Transverse colon (tissue), 4 donors: ENCODE measurements at regions of chr1 and their contacts with region 1.

Region 1: GRCh38 chr1:184075055-184076029 is 23.8 kb downstream of the TSEN15 start:
- DNase-seq: peak; percentile 15
- H3K4me3 ChIP-seq: no peak overlapping the region
- H3K27ac ChIP-seq: peak overlapping the region; percentile 7 to 54 (median 23)
- H3K4me1 ChIP-seq: peaks cover 0 to 14% (median 0%) of the 10 kb centered on the region in 4 donors
- H3K27me3 ChIP-seq: no peaks in the 10 kb centered on the region
- CTCF ChIP-seq: peak; percentile 67 to 77 (median 68)
- EP300 ChIP-seq: no peak
- POLR2A ChIP-seq: no peak

Region 2: DNA sequence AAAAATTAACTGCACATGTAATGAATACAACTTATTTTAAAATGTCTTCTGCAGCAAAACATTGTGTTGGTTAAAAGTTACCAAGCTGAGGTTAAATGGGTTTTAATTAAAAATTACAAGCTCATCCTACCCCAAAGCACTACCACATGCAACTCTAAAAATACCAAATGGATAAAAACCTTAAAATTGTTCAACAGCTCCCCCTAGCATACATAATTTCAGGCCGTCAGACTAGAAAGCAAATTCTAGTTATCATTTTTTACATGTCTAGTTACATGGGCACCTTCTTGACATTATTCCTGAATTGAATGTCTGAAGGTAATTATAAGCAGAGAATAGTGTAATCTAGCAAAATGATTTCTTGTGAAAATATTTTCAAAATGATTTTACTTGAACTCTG is 488.0 kb after region 1 on chr1:
- in situ Hi-C with region 1: loop called in 1 of 4 experiments (anchors 25 kb)
- intact Hi-C with region 1: no loop called
- DNase-seq: no peak
- H3K4me3 ChIP-seq: no peak overlapping the region
- H3K27ac ChIP-seq: peak overlapping the region in 1 of 4 donors; percentile 48
- H3K4me1 ChIP-seq: peaks cover 10 to 33% (median 22%) of the 10 kb centered on the region in 4 donors
- H3K27me3 ChIP-seq: no peaks in the 10 kb centered on the region
- CTCF ChIP-seq: peak; percentile 29 to 44 (median 40)
- EP300 ChIP-seq: no peak
- POLR2A ChIP-seq: no peak

Region 3: DNA sequence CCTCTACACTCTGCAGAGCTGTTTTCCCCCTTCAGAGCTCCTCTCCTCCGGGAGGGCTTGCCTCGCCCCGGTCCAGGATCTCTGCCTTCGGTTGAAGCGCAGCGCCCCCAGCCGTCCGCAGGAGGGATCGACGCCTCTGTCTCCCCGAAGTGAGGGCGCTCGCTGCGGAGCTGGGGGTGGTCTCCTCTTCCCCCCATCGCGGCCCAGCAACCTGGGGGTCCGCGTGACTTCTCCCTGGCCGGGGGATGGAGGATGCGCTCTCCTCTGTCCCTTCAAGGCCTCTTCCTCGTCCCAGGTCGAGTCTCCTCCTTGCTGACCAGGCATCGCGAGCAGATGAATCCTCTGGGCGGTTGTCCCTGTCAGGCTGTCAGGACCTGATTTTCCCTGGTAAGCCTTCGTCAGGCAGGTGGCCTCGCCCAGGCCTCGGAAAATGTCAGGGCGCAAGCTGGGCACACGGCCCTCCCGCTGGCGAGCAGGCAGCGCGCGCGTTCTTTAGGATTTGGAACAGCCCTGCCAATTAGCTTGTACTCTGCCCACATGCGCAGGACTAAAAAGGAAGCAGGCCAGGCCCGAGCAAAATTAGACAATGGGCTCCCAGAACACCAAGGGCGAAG is 588.8 kb after region 1 on chr1:
- in situ Hi-C with region 1: loop called in 3 of 4 experiments (anchors 5 to 25 kb)
- intact Hi-C with region 1: loop called (anchors 10 kb)
- DNase-seq: peak; percentile 79
- H3K4me3 ChIP-seq: peak overlapping the region in 3 of 4 donors; percentile 24 to 46 (median 26)
- H3K27ac ChIP-seq: peak overlapping the region in 1 of 4 donors; percentile 20
- H3K4me1 ChIP-seq: peaks cover 7 to 21% (median 11%) of the 10 kb centered on the region in 4 donors
- H3K27me3 ChIP-seq: no peaks in the 10 kb centered on the region
- CTCF ChIP-seq: peak; percentile 88 to 97 (median 93)
- EP300 ChIP-seq: no peak
- POLR2A ChIP-seq: no peak